ENCODE measurements at regions of chr15 and their contacts with region 1.

Region 1: DNA sequence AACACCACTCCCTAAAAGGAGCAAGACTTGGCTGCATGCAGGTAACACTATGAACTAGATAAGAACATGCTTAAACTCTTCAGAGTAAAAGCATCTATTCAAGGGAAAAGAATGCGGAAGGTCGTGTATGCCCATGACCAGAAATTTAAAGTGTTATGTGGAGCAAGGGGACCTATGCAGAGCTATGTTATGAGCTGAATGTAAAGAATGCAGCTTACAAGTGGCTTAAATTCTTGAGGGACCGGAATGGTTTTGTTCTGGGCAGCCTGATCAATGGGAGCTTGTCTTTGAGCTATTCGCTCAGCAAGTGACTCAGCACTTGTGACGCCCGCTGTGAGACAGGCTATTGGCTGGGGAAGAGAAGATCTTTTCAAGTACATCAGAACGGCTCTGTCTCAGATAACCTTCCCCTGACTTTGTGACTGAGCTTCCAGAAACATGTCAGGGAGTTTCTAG is 367.5 kb upstream of the THBS1 start:
- DNase-seq: peak; percentile 82 to 92
- H3K4me3 ChIP-seq: no peak overlapping the region
- H3K4me3 Mint-ChIP-seq: peak overlapping the region; percentile 57
- H3K27ac Mint-ChIP-seq: peak overlapping the region; percentile 97
- H3K4me1 ChIP-seq: peaks cover 17% of the 10 kb centered on the region
- H3K4me1 Mint-ChIP-seq: peaks cover 19% of the 10 kb centered on the region
- H3K27me3 ChIP-seq: no peaks in the 10 kb centered on the region
- H3K27me3 Mint-ChIP-seq: no peaks in the 10 kb centered on the region
- CTCF ChIP-seq: no peak

Region 2: DNA sequence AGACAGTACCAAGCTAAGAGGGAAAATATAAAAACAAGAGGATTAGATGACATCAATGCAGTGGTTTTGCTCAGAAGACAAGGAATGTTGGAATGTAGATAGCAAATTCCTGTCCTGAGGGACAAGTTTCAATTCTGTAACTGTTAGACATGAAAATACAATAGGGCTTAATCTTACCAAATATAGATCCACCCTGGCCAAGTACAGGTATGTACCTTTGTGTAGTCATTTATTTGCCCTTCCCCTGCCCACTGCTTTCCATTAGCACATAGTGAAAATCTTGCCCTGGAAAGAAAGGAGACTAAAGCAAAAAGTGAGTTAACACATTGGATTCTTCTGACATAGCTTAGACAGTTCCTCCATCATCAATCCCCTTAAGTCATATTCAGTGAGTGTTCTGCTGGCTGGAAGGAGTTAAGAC is 21.5 kb before region 1 on chr15:
- CTCF ChIA-PET with region 1: no interaction called
- POLR2A ChIA-PET with region 1: interaction called, 3 read pairs
- intact Hi-C with region 1: loop called (anchors 1 kb)
- DNase-seq: peak in 1 of 2 experiments; percentile 38
- H3K4me3 ChIP-seq: no peak overlapping the region
- H3K4me3 Mint-ChIP-seq: peak overlapping the region; percentile 30
- H3K27ac Mint-ChIP-seq: peak overlapping the region; percentile 88
- H3K4me1 ChIP-seq: peaks cover 27% of the 10 kb centered on the region
- H3K4me1 Mint-ChIP-seq: peaks cover 26% of the 10 kb centered on the region
- H3K27me3 ChIP-seq: no peaks in the 10 kb centered on the region
- H3K27me3 Mint-ChIP-seq: no peaks in the 10 kb centered on the region
- CTCF ChIP-seq: no peak

Measured in Caco-2 (cell line).